ENCODE measurements at regions of chrX and their contacts with region 1.

Region 1: GRCh38 chrX:55717521-55718497 is at the start of gene RRAGB:
- DNase-seq: peak; percentile 67 to 92 (median 88)
- ATAC-seq: peak; percentile 99
- H3K4me3 ChIP-seq: peak within 1 kb of the TSS; percentile 88
- H3K4me3 Mint-ChIP-seq: peak within 1 kb of the TSS; percentile 78 to 96 (median 88)
- H3K27ac ChIP-seq: peak within 1 kb of the TSS; percentile 86
- H3K27ac Mint-ChIP-seq: peak within 1 kb of the TSS; percentile 82 to 95 (median 90)
- H3K4me1 ChIP-seq: peaks cover 13 to 16% of the 10 kb centered on the region in 2 donors
- H3K4me1 Mint-ChIP-seq: peaks cover 23 to 53% (median 37%) of the 10 kb centered on the region in 7 donors
- H3K27me3 ChIP-seq: no peaks in the 10 kb centered on the region
- H3K27me3 Mint-ChIP-seq: no peaks in the 10 kb centered on the region
- total RNA-seq, gene RRAGB: 11.9 to 15.9 (median 12.9) TPM

Region 2: DNA sequence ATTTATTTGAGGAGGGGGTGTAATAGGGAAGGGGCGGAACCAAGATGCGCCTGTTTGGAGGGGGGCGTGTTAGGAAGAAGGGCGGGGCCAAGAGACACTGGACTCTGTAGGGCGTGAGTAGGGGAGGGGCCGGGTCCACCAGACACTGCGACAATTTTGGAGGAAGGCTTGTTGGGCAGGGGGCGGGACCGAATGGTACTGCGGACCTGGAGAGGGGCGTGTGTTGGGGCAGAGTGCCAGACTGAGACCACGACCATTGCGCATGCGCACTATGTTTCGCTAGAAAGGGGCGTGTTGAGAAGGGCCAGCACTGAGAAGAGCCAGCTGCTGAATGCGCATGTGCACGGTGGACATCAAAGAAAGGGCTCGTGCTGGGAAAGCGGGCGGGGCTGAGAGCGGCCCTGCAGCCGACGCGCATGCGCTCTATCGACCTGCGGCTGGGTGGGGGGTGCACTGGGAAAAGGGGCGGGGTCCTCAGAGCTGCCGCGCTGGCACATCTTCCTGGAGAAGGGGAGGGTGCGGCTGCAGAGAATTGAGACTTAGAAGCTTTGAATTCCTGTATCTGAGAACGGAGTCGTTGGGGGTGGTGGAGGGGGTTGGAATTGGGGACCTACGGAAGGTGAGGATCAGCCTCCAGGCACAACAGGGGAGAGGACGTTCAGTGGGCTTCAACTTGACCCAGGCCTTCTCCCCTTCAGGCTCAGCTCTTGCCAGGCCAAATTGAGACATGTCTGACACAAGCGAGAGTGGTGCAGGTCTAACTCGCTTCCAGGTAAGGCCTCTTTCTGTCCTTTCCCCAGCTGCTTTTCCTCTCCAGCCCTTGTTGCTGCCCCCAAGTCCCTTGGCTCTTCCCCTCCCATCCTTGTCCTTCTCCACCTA is 909.0 kb before region 1 on chrX:
- CTCF ChIA-PET with region 1: no interaction called
- POLR2A ChIA-PET with region 1: no interaction called
- intact Hi-C with region 1: loop called (anchors 1 to 5 kb)
- DNase-seq: peak; percentile 63 to 90 (median 84)
- ATAC-seq: peak; percentile 84
- H3K4me3 ChIP-seq: peak overlapping the region; percentile 93
- H3K4me3 Mint-ChIP-seq: peak overlapping the region; percentile 90 to 99 (median 96)
- H3K27ac ChIP-seq: peak overlapping the region; percentile 89
- H3K27ac Mint-ChIP-seq: peak overlapping the region; percentile 93 to 98 (median 96)
- H3K4me1 ChIP-seq: no peaks in the 10 kb centered on the region
- H3K4me1 Mint-ChIP-seq: peaks cover 5 to 28% (median 19%) of the 10 kb centered on the region in 7 donors
- H3K27me3 ChIP-seq: no peaks in the 10 kb centered on the region
- H3K27me3 Mint-ChIP-seq: peaks cover 0 to 25% (median 0%) of the 10 kb centered on the region in 5 donors

Region 3: DNA sequence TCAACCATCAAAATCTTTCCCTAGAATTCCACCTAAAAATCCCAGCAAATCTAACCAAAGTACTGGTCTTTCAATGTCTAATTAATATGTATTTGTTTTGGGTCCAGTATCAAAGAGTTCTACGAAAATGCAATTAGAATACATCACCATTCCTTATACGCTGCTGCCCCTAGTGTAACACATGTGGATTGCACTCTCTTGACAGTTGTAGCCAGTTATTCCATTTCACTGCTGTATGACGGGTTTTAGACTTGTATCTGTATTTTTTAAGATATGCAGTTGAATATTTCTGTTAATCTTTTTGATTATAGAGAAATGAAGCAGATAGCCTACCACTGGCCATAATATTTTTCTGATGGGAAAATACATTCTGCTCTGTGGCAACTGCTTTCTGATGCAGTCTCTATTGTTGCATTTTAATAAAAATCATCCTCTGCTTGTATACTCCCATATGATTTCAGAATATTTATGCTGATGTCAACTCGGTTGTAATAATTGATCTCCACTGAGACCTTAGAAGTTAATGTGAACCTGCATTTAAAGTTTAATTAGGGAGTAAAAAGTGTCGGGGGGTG is 660.0 kb before region 1 on chrX:
- CTCF ChIA-PET with region 1: no interaction called
- POLR2A ChIA-PET with region 1: no interaction called
- intact Hi-C with region 1: loop called in 1 of 2 experiments (anchors 5 kb)
- DNase-seq: peak in 6 of 9 donors; percentile 11 to 46 (median 32)
- ATAC-seq: peak; percentile 84
- H3K4me3 ChIP-seq: peak overlapping the region; percentile 35
- H3K4me3 Mint-ChIP-seq: peak overlapping the region; percentile 12 to 87 (median 76)
- H3K27ac ChIP-seq: no peak overlapping the region
- H3K27ac Mint-ChIP-seq: peak overlapping the region in 7 of 9 donors; percentile 43 to 95 (median 90)
- H3K4me1 ChIP-seq: peaks cover 8 to 16% of the 10 kb centered on the region in 2 donors
- H3K4me1 Mint-ChIP-seq: peaks cover 8 to 29% (median 21%) of the 10 kb centered on the region in 7 donors
- H3K27me3 ChIP-seq: no peaks in the 10 kb centered on the region
- H3K27me3 Mint-ChIP-seq: peaks cover 0 to 5% (median 0%) of the 10 kb centered on the region in 5 donors

Region 4: DNA sequence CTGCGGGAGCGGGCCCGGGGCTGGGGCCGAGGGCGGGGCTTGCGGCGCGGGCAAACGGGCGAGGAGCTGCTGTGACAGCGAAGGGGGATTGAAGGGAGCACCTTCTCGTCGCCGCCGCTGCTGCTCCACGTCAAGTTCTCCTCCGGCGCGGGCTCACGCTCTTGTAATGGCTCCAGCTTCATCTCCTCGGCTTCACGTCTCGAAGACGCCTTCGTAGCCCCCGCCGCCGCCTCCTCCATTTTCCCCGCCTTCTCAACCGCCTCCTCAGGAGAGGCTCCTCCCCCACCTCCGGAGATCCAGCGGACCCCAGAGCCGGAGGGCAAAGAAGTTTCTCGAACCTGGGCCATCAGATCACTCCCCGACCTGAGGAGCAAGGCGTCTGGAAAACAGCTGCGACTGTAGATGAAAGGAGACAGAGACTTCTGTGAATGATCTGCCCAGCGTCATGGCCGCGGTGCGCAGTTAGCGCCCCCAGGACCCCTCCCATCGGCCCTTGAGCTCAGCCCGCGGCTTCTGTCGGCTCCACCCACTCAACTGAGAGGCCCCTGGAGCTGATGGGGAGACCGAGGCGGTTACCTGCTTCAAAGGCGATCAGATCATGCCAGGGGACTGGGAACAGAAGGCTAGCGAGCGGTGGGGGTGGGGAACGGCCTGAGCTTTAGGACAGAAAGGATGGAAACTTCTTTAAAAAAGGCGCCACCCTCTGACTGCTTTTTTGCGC is 229.1 kb before region 1 on chrX:
- CTCF ChIA-PET with region 1: interaction called, 6 read pairs
- POLR2A ChIA-PET with region 1: interaction called, 28 read pairs
- intact Hi-C with region 1: no loop called
- DNase-seq: peak; percentile 46 to 78 (median 69)
- ATAC-seq: peak; percentile 83
- H3K4me3 ChIP-seq: peak overlapping the region; percentile 81
- H3K4me3 Mint-ChIP-seq: peak overlapping the region; percentile 89 to 97 (median 96)
- H3K27ac ChIP-seq: peak overlapping the region; percentile 92
- H3K27ac Mint-ChIP-seq: peak overlapping the region; percentile 91 to 98 (median 96)
- H3K4me1 ChIP-seq: no peaks in the 10 kb centered on the region
- H3K4me1 Mint-ChIP-seq: peaks cover 0 to 16% (median 12%) of the 10 kb centered on the region in 7 donors
- H3K27me3 ChIP-seq: no peaks in the 10 kb centered on the region
- H3K27me3 Mint-ChIP-seq: no peaks in the 10 kb centered on the region

Region 5: GRCh38 chrX:56232221-56233082 is 514.6 kb after region 1 on chrX and contains the start of gene KLF8:
- CTCF ChIA-PET with region 1: no interaction called
- POLR2A ChIA-PET with region 1: no interaction called
- intact Hi-C with region 1: loop called in 1 of 2 experiments (anchors 5 kb)
- DNase-seq: peak in 6 of 9 donors; percentile 3 to 40 (median 8)
- ATAC-seq: peak; percentile 73
- H3K4me3 ChIP-seq: peak within 1 kb of the TSS; percentile 41
- H3K4me3 Mint-ChIP-seq: peak within 1 kb of the TSS; percentile 80 to 89 (median 84)
- H3K27ac ChIP-seq: no peak within 1 kb of the TSS
- H3K27ac Mint-ChIP-seq: peak within 1 kb of the TSS in 6 of 9 donors; percentile 1 to 90 (median 32)
- H3K4me1 ChIP-seq: peaks cover 0 to 5% of the 10 kb centered on the region in 2 donors
- H3K4me1 Mint-ChIP-seq: peaks cover 5 to 48% (median 18%) of the 10 kb centered on the region in 7 donors
- H3K27me3 ChIP-seq: no peaks in the 10 kb centered on the region
- H3K27me3 Mint-ChIP-seq: peaks cover 0 to 4% (median 0%) of the 10 kb centered on the region in 5 donors
- total RNA-seq, gene KLF8: 0.38 to 17.9 (median 6.3) TPM

Region 6: GRCh38 chrX:56729152-56729850 is 1011.5 kb after region 1 on chrX and contains the start of gene NBDY:
- CTCF ChIA-PET with region 1: no interaction called
- POLR2A ChIA-PET with region 1: no interaction called
- intact Hi-C with region 1: loop called (anchors 1 to 5 kb)
- DNase-seq: peak in 7 of 9 donors; percentile 21 to 55 (median 40)
- ATAC-seq: peak; percentile 84
- H3K4me3 ChIP-seq: peak within 1 kb of the TSS; percentile 94
- H3K4me3 Mint-ChIP-seq: peak within 1 kb of the TSS; percentile 80 to 96 (median 90)
- H3K27ac ChIP-seq: peak within 1 kb of the TSS; percentile 95
- H3K27ac Mint-ChIP-seq: peak within 1 kb of the TSS; percentile 89 to 96 (median 95)
- H3K4me1 ChIP-seq: peaks cover 0 to 3% of the 10 kb centered on the region in 2 donors
- H3K4me1 Mint-ChIP-seq: peaks cover 3 to 43% (median 34%) of the 10 kb centered on the region in 7 donors
- H3K27me3 ChIP-seq: no peaks in the 10 kb centered on the region
- H3K27me3 Mint-ChIP-seq: no peaks in the 10 kb centered on the region
- total RNA-seq, gene NBDY: 24.9 to 45.8 (median 31.7) TPM